Heart right ventricle (tissue), 16 donors: ENCODE measurements at regions of chr3 and their contacts with region 1.

Region 1: GRCh38 chr3:10164546-10165393 is at the start of gene IRAK2:
- DNase-seq: peak; percentile 70 to 80
- ATAC-seq: peak; percentile 93 to 97 (median 95)
- H3K4me3 ChIP-seq: peak within 1 kb of the TSS; percentile 56 to 92 (median 82)
- H3K27ac ChIP-seq: peak within 1 kb of the TSS in 8 of 10 donors; percentile 3 to 89 (median 72)
- H3K4me1 ChIP-seq: peaks cover 0 to 27% (median 5%) of the 10 kb centered on the region in 9 donors
- H3K27me3 ChIP-seq: no peaks in the 10 kb centered on the region
- CTCF ChIP-seq: peak; percentile 86 to 98 (median 97)
- total RNA-seq, gene IRAK2: 0.92 to 3.6 (median 1.5) TPM

Region 2: DNA sequence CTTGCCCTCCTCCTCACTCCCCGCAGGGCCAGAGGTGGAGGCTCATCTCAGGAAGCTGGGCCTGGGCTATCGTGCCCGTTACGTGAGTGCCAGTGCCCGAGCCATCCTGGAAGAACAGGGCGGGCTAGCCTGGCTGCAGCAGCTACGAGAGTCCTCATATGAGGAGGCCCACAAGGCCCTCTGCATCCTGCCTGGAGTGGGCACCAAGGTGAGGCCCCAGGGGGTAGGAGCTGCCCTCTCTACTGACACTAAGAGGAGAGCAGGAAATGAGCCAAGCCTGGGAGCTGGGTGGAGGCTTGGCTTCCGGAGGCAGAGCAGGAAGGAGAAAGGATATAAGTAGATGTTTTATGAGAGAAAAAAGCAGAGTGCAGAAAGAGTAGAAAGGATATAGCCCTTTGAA is 410.1 kb before region 1 on chr3:
- intact Hi-C with region 1: no loop called
- DNase-seq: no peak
- ATAC-seq: no peak
- H3K4me3 ChIP-seq: no peak overlapping the region
- H3K27ac ChIP-seq: peak overlapping the region in 7 of 10 donors; percentile 35 to 66 (median 42)
- H3K4me1 ChIP-seq: peaks cover 2 to 36% (median 30%) of the 10 kb centered on the region in 9 donors
- H3K27me3 ChIP-seq: no peaks in the 10 kb centered on the region
- CTCF ChIP-seq: no peak

Region 3: GRCh38 chr3:10219737-10220136 is 55.0 kb after region 1 on chr3:
- intact Hi-C with region 1: loop called in 9 of 10 experiments (anchors 2 to 10 kb)
- DNase-seq: no peak
- ATAC-seq: no peak
- H3K4me3 ChIP-seq: no peak overlapping the region
- H3K27ac ChIP-seq: peak overlapping the region in 1 of 10 donors; percentile 47
- H3K4me1 ChIP-seq: peaks cover 0 to 32% (median 1%) of the 10 kb centered on the region in 9 donors
- H3K27me3 ChIP-seq: no peaks in the 10 kb centered on the region
- CTCF ChIP-seq: no peak